Esophagus muscularis mucosa (tissue), 4 donors: ENCODE measurements at regions of chr11 and their contacts with region 1.

Region 1: DNA sequence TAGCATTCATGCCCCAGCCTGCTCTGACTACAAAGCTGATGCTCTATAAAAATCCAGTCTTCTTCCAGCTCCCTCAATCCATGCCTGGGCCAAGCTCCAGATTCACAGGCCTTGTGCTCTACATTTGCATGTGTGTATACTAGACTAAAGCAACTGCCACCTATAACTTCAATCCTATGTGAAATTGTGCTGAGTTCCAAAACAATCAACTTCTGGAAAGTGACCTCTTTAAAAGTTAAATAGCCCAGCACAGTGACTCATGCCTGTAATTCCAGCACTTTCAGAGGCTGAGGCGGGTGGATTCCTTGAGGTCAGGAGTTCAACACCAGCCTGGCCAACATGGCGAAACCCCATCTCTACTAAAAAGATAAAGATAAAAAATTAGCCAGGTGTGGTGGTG is 114.3 kb upstream of the ZC3H12C start:
- DNase-seq: no peak
- H3K4me3 ChIP-seq: no peak overlapping the region
- H3K27ac ChIP-seq: no peak overlapping the region
- H3K4me1 ChIP-seq: no peaks in the 10 kb centered on the region
- H3K27me3 ChIP-seq: no peaks in the 10 kb centered on the region
- CTCF ChIP-seq: no peak
- EP300 ChIP-seq: no peak
- POLR2A ChIP-seq: no peak

Region 2: DNA sequence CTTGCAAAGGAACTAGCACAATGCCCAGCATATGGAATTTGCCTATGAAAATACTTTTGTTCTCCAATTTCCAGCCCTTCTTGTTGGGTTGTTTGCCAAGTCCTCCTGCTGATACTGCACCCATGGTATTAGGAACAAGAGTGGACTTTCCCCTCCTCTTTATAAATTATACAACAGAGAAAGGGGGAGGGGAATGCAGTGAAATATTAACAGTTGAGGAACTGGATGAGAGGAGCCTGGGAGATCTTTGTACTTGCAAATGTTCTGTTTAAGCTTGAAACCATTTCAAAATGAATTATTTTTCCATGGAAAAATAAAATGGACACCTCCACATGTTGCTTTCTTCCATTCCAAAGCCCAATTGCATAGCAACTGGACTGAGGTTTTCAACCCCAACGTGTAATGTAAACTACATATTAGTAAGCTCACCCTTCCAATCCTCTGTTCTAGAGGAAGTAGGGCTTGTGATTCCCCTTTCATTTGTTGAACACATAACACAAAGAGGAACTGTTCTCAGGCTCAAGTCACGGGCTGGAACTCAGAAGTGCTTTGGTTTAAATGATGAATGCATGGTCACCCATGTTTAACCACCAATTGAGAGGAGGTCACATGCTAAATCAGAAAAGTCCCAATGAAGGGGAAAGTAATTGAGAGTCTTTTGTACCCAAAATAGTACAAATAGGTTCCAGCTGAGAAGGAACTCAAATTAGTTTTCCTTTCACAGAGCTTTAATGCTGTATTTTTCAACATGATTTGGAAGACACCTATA is 48.1 kb after region 1 on chr11:
- intact Hi-C with region 1: loop called (anchors 5 kb)
- DNase-seq: no peak
- H3K4me3 ChIP-seq: no peak overlapping the region
- H3K27ac ChIP-seq: no peak overlapping the region
- H3K4me1 ChIP-seq: no peaks in the 10 kb centered on the region
- H3K27me3 ChIP-seq: no peaks in the 10 kb centered on the region
- CTCF ChIP-seq: no peak
- EP300 ChIP-seq: no peak
- POLR2A ChIP-seq: no peak

Region 3: DNA sequence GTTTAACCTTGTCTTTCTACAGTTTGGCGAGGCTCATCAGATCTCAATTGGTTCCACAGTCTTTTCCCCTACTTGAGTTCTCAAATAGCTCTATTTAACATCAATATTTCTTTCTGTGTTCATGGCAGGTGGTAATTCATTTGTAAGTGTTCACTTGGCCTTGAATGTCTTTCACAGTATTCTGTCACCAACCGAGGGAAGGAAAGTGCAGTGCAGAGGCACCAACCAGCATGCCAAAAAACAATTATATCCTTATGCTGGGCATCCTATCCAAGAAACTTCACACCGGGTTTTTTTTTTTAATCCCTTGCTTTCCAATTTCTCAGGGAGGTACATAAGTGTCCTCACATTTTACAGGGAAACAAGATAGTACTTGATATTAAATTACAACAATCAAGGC is 59.3 kb after region 1 on chr11:
- intact Hi-C with region 1: no loop called
- DNase-seq: no peak
- H3K4me3 ChIP-seq: no peak overlapping the region
- H3K27ac ChIP-seq: no peak overlapping the region
- H3K4me1 ChIP-seq: no peaks in the 10 kb centered on the region
- H3K27me3 ChIP-seq: no peaks in the 10 kb centered on the region
- CTCF ChIP-seq: no peak
- EP300 ChIP-seq: no peak
- POLR2A ChIP-seq: no peak